ENCODE measurements at regions of chr5 and their contacts with region 1.

Region 1: DNA sequence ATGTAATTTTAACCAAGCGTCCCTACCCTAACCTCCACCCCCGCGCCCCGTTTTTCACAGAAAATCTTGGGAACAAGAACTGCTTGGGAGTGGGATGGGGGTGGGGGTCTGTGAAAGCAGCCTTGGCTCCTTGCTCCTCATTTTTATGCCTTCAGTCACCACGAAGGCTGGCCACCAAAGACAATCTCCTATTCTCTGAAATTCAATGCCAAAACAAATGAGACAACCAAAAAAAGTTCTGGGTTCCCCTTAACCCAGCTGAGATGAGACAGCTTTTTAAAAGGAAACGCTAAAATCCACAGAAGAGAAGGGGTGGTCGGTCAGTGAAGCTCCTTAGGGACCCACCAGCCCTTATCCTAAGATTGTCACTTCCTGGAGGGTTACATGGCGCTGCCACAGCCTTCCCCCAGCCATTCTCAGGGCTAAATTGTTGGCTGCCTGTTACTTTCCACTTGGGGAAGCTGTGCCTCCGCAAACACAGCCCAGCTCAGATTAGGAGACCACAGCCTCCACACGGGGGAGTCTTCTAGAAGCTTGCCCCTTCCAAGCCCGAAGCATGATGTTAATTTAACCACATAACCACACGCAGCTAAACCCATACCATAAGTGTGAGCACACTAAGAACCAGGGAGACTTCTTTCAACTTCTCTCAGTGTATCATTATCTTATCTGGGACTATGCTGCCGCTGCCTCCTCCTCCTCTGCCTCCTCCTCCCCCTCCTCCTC is 136.3 kb downstream of the FOXD1 start:
- DNase-seq: no peak
- H3K4me3 ChIP-seq: no peak overlapping the region
- H3K27ac ChIP-seq: no peak overlapping the region
- H3K4me1 ChIP-seq: peaks cover 2% of the 10 kb centered on the region
- H3K27me3 ChIP-seq: no peaks in the 10 kb centered on the region
- CTCF ChIP-seq: no peak

Region 2: GRCh38 chr5:73434459-73434858 is 122.2 kb after region 1 on chr5:
- CTCF ChIA-PET with region 1: no interaction called
- POLR2A ChIA-PET with region 1: interaction called, 15 read pairs
- intact Hi-C with region 1: no loop called
- DNase-seq: no peak
- H3K4me3 ChIP-seq: no peak overlapping the region
- H3K27ac ChIP-seq: peak overlapping the region; percentile 74
- H3K4me1 ChIP-seq: peaks cover 22% of the 10 kb centered on the region
- H3K27me3 ChIP-seq: no peaks in the 10 kb centered on the region
- CTCF ChIP-seq: peak; percentile 25; the same call in 1 of the 2 replicates